Aorta (tissue), 5 donors: ENCODE measurements at regions of chr2 and their contacts with region 1.

Region 1: GRCh38 chr2:107418708-107419107 is 408.0 kb upstream of the RGPD4 start:
- DNase-seq: no peak
- ATAC-seq: no peak
- H3K4me3 ChIP-seq: no peak overlapping the region
- H3K27ac ChIP-seq: no peak overlapping the region
- H3K4me1 ChIP-seq: no peaks in the 10 kb centered on the region
- H3K27me3 ChIP-seq: no peaks in the 10 kb centered on the region

Region 2: GRCh38 chr2:107308835-107309234 is 109.9 kb before region 1 on chr2:
- intact Hi-C with region 1: loop called in 1 of 2 experiments (anchors 5 kb)
- DNase-seq: no peak
- ATAC-seq: no peak
- H3K4me3 ChIP-seq: no peak overlapping the region
- H3K27ac ChIP-seq: no peak overlapping the region
- H3K4me1 ChIP-seq: no peaks in the 10 kb centered on the region
- H3K27me3 ChIP-seq: no peaks in the 10 kb centered on the region